ENCODE measurements at regions of chr1 and their contacts with region 1.

Region 1: DNA sequence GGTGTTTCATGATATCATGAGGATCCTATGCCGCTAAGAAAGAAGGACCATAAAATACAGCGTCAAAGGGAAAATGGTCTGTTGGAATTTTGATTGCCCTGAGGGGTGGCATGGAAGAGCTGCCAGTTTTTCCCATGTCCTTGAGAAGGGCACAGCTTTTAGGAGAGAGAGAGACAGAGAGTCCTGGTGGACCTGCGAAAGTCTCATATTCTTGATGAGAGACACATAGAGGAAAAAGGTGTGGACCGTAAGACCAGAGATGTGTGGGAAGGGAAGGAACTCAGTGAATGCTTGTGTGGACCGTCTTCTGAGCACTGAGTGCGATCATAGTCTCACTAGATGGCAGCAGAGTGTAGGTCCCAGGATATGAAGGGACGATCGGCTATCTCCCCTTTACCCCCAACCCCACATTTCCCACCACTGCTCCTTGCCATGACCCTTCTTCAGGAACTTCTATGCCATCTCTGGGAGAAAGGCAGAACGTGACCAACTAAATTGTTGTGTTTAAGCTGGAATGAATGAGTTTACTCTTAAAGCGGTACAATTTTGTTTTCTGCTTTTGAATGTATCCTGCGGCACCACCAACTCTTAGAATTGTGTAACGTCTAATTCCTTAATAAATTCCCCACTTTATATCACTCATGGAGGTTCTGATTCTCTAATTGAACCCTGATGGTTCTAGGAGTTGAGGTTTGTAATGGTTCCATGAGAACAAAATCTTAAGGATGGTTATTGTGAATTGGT is 117.7 kb downstream of the CTH start:
- DNase-seq: no peak
- ATAC-seq: peak; percentile 70

Region 2: GRCh38 chr1:70552662-70553566 is 24.2 kb after region 1 on chr1:
- intact Hi-C with region 1: loop called (anchors 2 kb)
- DNase-seq: no peak
- ATAC-seq: no peak

Region 3: DNA sequence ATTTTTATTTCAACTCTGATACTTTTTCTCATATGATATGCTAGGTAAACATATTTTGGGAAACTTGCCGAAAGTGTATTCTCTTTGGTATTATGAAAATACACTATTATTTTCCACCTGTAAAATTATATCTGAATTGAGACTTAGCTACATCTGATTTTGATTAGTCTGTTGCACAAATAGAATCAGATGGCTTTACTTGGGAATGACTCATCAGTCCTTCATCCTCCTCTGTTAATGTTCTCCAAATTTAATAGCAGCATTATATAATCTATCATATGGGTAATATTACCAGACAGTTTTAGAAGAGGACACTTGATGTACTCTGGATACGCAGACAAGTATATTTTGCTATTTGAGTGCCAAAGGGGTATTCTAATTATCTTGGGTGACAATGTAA is 127.6 kb after region 1 on chr1:
- intact Hi-C with region 1: no loop called
- DNase-seq: no peak
- ATAC-seq: no peak